Posterior cingulate gyrus (tissue), 11 donors: ENCODE measurements at regions of chr2 and their contacts with region 1.

Region 1: GRCh38 chr2:207166039-207166348 is 246 bp upstream of the KLF7 start:
- DNase-seq: peak; percentile 99 to 100 (median 100)

Region 2: DNA sequence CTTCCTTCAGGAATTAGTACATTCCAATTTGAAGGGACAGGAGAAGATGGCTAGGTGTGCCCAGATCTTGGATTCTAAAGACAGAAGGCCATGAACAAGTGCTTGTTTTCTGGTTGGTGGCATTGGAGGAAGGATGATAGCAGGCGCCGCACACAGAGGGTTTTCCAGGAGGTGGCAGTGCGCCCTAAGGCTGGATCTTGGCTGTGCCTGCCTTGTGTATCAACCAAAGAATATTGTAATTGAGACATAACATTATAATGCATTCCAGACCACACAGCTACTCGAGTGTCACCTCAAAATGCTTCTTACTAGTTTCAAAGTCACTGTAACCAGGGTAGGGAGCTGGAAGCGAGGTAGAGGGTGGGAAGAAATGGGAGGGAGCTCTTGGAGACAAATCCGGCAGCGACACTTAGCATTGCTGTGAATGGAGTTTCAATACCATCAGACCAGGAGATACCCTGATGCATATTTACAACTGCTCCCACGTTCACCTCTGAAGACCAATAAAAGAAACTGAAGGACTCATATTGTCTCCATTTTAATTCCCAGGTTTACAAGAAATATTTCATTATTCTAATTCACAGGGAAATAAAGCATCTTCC is 184.2 kb before region 1 on chr2:
- intact Hi-C with region 1: loop called (anchors 2 kb)
- DNase-seq: peak; percentile 78 to 98 (median 88)

Region 3: DNA sequence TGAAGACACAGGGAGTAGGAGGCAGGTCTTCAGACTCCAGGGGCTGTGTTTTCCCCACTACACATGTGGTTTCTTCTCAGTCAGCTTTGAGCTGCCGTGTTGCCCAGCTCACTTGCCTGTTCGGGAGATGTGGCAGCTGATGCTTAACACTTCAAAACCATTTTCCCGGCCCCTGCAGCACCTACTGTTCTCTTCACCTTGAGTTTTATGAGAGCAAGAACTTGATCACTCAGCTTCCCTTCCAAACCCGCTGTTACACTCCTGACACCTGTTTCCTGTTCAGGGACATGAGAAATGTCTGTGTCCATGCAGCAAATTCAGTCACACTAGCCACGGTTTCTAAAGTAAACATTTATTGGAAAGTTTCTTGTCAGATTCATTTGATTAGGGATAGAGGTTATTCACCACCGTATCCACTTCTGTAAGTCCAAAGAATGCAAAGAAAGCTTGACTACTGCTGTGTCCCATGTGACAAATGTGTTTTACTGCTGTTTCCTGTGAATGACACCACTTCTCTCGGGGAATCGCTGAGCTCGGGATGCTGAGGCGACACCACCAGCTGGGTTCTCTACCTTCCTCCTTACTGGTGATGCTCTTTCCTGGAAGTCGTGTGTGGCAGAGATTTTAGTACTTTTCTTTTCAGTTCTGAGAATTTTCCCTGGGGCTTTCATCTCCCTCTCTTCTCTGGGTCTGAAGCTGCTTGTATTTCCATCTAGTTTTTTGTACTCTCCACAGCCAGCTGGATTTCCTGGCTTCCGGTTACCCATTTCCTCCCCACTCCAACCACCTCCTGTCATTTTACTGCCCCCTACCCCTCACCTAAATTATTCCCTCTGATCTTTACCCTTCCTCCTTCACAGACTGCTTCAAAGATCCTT is 92.0 kb before region 1 on chr2:
- intact Hi-C with region 1: loop called (anchors 5 kb)
- DNase-seq: peak in 6 of 10 donors; percentile 16 to 83 (median 56)

Region 4: GRCh38 chr2:207227062-207227748 is 61.2 kb after region 1 on chr2:
- intact Hi-C with region 1: loop called (anchors 1 kb)
- DNase-seq: peak; percentile 55 to 95 (median 70)

Region 5: GRCh38 chr2:207950063-207950760 is 784.2 kb after region 1 on chr2:
- intact Hi-C with region 1: no loop called
- DNase-seq: no peak